ENCODE measurements at regions of chr17 and their contacts with region 1.

Region 1: DNA sequence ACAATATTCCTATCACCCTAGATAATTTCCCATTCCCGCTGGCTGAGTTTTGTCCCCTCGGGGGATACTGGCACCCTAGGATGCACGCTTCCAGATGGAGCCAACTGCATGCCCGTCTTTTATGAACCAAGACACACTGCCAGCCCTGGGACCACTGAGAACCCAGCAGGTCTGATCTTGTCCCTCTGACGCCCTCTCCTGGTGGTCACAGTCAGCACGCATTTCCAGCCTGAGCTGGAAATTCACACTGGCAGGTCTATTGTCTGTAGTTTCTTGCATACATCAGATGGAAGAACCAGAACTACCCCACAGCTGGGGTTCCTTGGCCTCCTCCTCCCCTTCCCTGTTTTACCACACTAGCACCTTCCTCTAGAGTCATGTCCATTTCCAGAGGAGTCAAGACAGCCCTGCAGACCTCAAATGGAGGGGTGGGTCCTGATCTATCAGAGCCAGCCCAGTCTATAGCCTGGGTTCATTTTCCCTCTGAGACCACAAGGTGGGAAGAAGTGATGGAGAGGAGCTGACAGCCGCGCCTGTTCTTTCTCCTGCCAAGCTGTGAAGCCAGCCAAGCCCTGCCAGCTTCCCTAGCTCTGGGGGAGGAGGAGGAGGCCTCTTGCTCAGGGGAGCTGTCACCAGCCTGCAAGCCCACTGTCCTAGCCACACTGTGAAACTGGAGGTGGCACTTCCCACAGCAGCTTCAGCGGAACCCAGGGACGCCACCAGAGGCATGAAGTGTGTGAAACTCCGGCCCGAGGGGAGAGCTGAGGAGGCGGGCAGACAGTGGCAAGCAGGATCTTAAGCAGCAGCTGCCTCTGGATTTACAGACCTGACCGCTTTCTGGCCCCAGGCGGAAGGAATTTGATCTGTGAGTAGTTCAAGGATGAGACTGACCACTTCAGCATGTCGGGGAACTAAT is 29.3 kb downstream of the MXRA7 start:
- DNase-seq: peak; percentile 42
- H3K4me3 ChIP-seq: no peak overlapping the region
- H3K27ac ChIP-seq: no peak overlapping the region
- H3K27me3 ChIP-seq: no peaks in the 10 kb centered on the region
- CTCF ChIP-seq: peak; percentile 81

Region 2: DNA sequence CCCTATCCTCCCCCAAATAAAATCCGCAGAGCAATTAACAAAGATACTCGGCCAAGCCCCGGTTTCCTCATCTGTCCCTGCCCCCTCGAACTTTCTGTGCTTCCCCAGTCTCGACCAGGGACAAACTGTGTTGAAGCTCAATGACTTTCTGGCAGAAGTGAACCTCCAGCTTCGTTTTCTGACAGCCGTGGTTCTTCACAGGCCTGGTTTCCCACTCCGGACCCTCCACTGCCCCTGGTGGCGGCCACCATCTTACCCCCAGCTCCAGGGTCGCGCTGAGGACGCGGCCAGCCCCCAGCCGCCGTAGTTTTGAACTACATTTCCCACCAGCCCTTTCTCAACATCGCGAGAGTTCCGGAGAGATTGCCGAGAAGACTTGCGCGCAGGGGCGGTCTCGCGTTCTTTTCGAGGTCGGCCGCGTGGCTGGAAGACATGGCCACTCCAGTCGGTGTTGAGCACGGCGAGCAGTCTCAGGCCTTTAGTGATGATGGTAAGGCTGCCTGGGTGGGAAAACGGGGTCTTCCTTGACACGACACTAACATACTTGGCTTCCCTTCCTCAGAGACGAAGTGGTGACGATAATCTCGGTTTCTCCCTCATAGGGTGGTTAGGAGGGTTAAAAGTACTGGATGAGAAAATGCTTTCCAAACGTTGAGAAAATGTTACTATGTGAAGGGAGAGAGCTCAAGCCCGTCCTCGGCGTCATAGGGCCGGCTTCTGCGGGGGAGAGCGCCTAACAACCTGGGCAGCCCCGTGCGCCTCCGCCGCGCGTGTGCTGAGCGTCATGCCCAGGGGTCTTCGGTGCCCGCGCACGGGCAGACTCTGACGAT is 123.9 kb before region 1 on chr17:
- CTCF ChIA-PET with region 1: interaction called, 12 read pairs
- POLR2A ChIA-PET with region 1: interaction called, 3 read pairs
- DNase-seq: peak; percentile 91
- H3K4me3 ChIP-seq: peak overlapping the region; percentile 95
- H3K27ac ChIP-seq: peak overlapping the region; percentile 68
- H3K27me3 ChIP-seq: no peaks in the 10 kb centered on the region
- CTCF ChIP-seq: peak; percentile 70

Region 3: GRCh38 chr17:76650504-76650903 is 31.0 kb before region 1 on chr17:
- CTCF ChIA-PET with region 1: no interaction called
- POLR2A ChIA-PET with region 1: no interaction called
- DNase-seq: no peak
- H3K4me3 ChIP-seq: no peak overlapping the region
- H3K27ac ChIP-seq: no peak overlapping the region
- H3K27me3 ChIP-seq: peaks cover 11% of the 10 kb centered on the region
- CTCF ChIP-seq: no peak

Region 4: GRCh38 chr17:76671123-76671911 is 10.2 kb before region 1 on chr17:
- CTCF ChIA-PET with region 1: interaction called, 15 read pairs
- POLR2A ChIA-PET with region 1: interaction called, 3 read pairs
- DNase-seq: peak; percentile 100
- H3K4me3 ChIP-seq: peak overlapping the region; percentile 75
- H3K27ac ChIP-seq: peak overlapping the region; percentile 61
- H3K27me3 ChIP-seq: no peaks in the 10 kb centered on the region
- CTCF ChIP-seq: no peak

Measured in AG04450 (cell line).